ENCODE measurements at regions of chr3 and their contacts with region 1.

Region 1: DNA sequence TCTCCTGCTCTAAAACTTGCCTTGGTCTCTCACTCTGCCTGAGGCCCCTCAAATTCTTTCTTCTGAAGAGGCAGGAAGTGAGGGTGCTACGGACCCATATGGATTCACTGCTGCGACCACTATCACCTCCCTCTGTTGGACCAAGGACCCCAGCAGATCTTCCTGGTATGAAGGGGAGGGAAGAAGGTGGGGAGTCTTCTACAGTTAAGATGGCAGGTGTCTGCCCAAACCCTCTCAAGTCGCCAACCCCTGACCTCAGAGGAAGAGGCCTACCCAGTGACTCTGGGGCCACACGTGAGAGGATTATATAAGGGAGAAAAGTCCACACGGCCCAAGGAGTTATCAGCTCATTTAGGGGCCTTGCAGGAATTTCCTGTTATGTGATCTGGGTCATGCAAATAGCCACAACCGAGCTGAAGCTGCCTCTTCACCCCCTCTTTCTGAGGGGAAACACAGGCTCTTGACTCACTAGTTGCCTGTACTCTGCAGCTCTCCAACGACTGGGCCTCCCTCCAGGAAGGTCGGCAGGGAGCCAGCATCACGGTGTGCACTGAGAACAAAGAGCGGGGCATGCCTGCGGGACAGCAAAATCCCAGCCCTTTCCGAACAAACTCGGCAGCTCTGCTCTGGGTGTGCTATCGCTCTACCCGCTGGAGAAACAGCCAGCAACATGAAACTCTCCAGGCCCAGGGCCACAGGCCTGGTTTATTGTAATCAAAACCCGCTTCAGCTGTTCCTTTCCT is 116.0 kb downstream of the XXYLT1 start:
- DNase-seq: peak; percentile 88
- ATAC-seq: peak; percentile 42
- H3K4me3 ChIP-seq: no peak overlapping the region
- H3K27ac ChIP-seq: peak overlapping the region; percentile 78
- H3K4me1 ChIP-seq: peaks cover 56% of the 10 kb centered on the region
- H3K27me3 ChIP-seq: no peaks in the 10 kb centered on the region
- CTCF ChIP-seq: no peak

Region 2: DNA sequence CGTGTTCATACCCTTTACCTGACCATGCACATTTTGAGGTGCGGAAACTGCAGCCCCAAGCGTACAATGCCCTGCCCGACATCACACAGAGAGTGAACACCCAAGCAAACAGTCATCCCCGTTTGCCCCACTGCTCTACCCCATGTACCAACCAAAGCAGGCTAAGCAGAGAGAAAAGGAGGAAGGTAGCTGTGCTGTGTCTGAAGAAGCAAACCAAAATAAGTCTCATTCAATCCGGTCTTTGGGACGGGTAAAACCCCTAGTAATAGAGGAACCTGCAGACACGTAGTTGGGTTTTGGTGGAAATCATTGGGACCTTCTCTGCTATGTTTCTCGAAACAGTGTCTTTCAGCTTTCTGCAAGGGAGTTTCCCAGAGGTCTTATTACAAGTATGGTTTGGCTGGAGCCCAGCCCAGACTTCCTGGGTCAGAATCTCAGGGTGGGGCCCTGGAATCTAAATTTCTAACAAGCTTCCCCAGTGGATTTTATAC is 1183.7 kb before region 1 on chr3:
- CTCF ChIA-PET with region 1: no interaction called
- POLR2A ChIA-PET with region 1: no interaction called
- intact Hi-C with region 1: no loop called
- DNase-seq: peak; percentile 81
- ATAC-seq: peak; percentile 86
- H3K4me3 ChIP-seq: peak overlapping the region; percentile 66
- H3K27ac ChIP-seq: peak overlapping the region; percentile 91
- H3K4me1 ChIP-seq: peaks cover 35% of the 10 kb centered on the region
- H3K27me3 ChIP-seq: no peaks in the 10 kb centered on the region
- CTCF ChIP-seq: no peak

Region 3: GRCh38 chr3:194715012-194715800 is 439.8 kb before region 1 on chr3:
- CTCF ChIA-PET with region 1: no interaction called
- POLR2A ChIA-PET with region 1: no interaction called
- intact Hi-C with region 1: no loop called
- DNase-seq: peak; percentile 28
- ATAC-seq: no peak
- H3K4me3 ChIP-seq: no peak overlapping the region
- H3K27ac ChIP-seq: no peak overlapping the region
- H3K4me1 ChIP-seq: peaks cover 18% of the 10 kb centered on the region
- H3K27me3 ChIP-seq: no peaks in the 10 kb centered on the region
- CTCF ChIP-seq: no peak

Region 4: GRCh38 chr3:195197765-195198425 is 42.9 kb after region 1 on chr3:
- CTCF ChIA-PET with region 1: no interaction called
- POLR2A ChIA-PET with region 1: no interaction called
- intact Hi-C with region 1: loop called (anchors 2 kb)
- DNase-seq: peak; percentile 90
- ATAC-seq: peak; percentile 88
- H3K4me3 ChIP-seq: 0 out of 2 replicates have a peak overlapping the region, but pooled peaks have one; percentile 3
- H3K27ac ChIP-seq: peak overlapping the region; percentile 75
- H3K4me1 ChIP-seq: peaks cover 30% of the 10 kb centered on the region
- H3K27me3 ChIP-seq: no peaks in the 10 kb centered on the region
- CTCF ChIP-seq: no peak

Region 5: GRCh38 chr3:195271116-195271858 is 116.3 kb after region 1 on chr3 and contains the start of gene XXYLT1:
- CTCF ChIA-PET with region 1: no interaction called
- POLR2A ChIA-PET with region 1: no interaction called
- intact Hi-C with region 1: no loop called
- DNase-seq: peak; percentile 91
- ATAC-seq: peak; percentile 81
- H3K4me3 ChIP-seq: peak within 1 kb of the TSS; percentile 82
- H3K27ac ChIP-seq: peak within 1 kb of the TSS; percentile 57
- H3K4me1 ChIP-seq: peaks cover 21% of the 10 kb centered on the region
- H3K27me3 ChIP-seq: no peaks in the 10 kb centered on the region
- CTCF ChIP-seq: peak; percentile 98
- total RNA-seq, gene XXYLT1: 25.5 and 27.8 TPM in 2 replicates

Region 6: DNA sequence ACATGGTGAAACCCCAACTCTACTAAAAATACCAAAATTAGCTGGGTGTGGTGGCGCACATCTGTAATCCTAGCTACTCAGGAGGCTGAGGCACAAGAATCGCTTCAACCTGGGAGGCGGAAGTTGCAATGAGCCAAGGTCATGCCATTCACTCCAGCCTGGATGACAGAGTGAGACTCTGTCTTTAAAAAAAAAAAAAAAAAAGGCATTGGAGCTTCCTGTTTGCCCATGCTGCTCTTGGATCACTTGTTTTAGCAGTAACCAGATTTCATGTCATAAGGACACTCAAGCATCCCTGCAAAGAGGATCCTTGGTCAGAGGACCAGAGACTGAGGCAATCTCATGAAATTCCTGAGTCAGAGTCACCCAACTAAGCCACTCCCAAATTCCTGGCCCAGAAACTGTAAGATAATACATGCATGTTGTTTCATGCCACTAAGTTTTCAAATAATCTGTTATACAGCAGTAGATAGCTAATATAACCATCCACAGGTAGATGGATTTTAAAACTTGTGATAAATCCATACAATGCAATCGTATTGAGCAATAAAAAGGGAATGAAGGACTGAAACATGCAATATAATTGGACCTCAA is 198.0 kb after region 1 on chr3:
- CTCF ChIA-PET with region 1: no interaction called
- POLR2A ChIA-PET with region 1: no interaction called
- intact Hi-C with region 1: no loop called
- DNase-seq: peak; percentile 65
- ATAC-seq: peak; percentile 97
- H3K4me3 ChIP-seq: no peak overlapping the region
- H3K27ac ChIP-seq: no peak overlapping the region
- H3K4me1 ChIP-seq: 0 out of 2 replicates have a peak, but pooled peaks cover 7% of the 10 kb centered on the region
- H3K27me3 ChIP-seq: no peaks in the 10 kb centered on the region
- CTCF ChIP-seq: no peak

Measured in PC-3 (cell line).